Right ventricle myocardium inferior (tissue), 1 donor: ENCODE measurements at regions of chr22 and their contacts with region 1.

Region 1: GRCh38 chr22:35921777-35922176 is 106.8 kb downstream of the RBFOX2 start:
- DNase-seq: no peak
- ATAC-seq: peak; percentile 92

Region 2: DNA sequence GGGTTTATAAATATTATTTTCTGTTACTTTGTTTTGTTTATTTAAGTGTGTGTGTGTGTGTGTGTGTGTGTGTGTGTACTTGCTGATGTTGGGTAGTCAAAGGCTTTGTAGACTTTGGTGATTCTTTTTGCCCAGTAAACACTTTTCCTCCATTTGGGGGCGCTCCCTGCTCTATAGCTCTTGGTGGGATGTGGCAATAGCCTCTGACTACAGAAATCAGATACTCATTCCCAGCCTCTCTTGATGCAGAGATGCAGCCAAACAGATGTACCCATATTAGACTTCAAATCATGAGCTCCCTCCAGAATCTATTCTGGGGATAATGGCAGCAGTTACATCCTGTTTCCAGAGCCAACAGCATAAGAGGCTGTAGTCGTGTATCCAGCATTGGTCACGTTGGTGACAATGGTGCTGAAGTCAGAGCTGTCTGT is 237.5 kb before region 1 on chr22:
- intact Hi-C with region 1: loop called (anchors 2 kb)
- DNase-seq: no peak
- ATAC-seq: peak; percentile 93